ENCODE measurements at regions of chr1 and their contacts with region 1.

Region 1: GRCh38 chr1:50929376-50929958 is 30.6 kb downstream of the FAF1 start:
- DNase-seq: peak; percentile 52
- H3K4me3 ChIP-seq: no peak overlapping the region
- H3K27ac ChIP-seq: no peak overlapping the region
- H3K4me1 ChIP-seq: no peaks in the 10 kb centered on the region
- H3K27me3 ChIP-seq: no peaks in the 10 kb centered on the region
- CTCF ChIP-seq: peak; percentile 23 to 36
- POLR2A ChIP-seq: no peak

Region 2: DNA sequence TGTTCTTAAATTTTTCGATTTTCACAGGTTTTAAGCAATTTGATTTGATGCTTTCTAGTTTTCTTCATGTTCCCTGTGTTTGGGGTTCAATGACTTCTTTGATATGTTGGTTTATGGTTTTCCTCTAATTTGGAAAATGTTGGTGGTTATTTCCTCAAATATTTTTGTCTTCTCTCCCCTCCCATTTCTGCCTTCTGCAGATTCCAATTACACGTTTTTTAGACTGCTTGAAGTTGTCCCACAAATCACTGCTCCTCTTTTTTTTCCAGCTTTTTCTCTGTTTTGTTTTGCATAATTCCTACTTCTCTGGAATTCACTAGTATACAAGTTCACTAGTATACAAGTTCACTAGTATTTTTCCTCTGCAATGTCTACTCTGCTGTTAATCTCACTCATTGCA is 30.7 kb before region 1 on chr1:
- CTCF ChIA-PET with region 1: interaction called, 15 read pairs
- POLR2A ChIA-PET with region 1: no interaction called
- dilution Hi-C with region 1: no loop called
- intact Hi-C with region 1: no loop called
- DNase-seq: no peak
- H3K4me3 ChIP-seq: no peak overlapping the region
- H3K27ac ChIP-seq: no peak overlapping the region
- H3K4me1 ChIP-seq: no peaks in the 10 kb centered on the region
- H3K27me3 ChIP-seq: no peaks in the 10 kb centered on the region
- CTCF ChIP-seq: no peak
- POLR2A ChIP-seq: no peak

Region 3: GRCh38 chr1:50950396-50950795 is 20.9 kb after region 1 on chr1:
- CTCF ChIA-PET with region 1: interaction called, 21 read pairs
- POLR2A ChIA-PET with region 1: no interaction called
- dilution Hi-C with region 1: no loop called
- intact Hi-C with region 1: no loop called
- DNase-seq: no peak
- H3K4me3 ChIP-seq: no peak overlapping the region
- H3K27ac ChIP-seq: no peak overlapping the region
- H3K4me1 ChIP-seq: no peaks in the 10 kb centered on the region
- H3K27me3 ChIP-seq: no peaks in the 10 kb centered on the region
- CTCF ChIP-seq: no peak
- POLR2A ChIP-seq: no peak

Region 4: DNA sequence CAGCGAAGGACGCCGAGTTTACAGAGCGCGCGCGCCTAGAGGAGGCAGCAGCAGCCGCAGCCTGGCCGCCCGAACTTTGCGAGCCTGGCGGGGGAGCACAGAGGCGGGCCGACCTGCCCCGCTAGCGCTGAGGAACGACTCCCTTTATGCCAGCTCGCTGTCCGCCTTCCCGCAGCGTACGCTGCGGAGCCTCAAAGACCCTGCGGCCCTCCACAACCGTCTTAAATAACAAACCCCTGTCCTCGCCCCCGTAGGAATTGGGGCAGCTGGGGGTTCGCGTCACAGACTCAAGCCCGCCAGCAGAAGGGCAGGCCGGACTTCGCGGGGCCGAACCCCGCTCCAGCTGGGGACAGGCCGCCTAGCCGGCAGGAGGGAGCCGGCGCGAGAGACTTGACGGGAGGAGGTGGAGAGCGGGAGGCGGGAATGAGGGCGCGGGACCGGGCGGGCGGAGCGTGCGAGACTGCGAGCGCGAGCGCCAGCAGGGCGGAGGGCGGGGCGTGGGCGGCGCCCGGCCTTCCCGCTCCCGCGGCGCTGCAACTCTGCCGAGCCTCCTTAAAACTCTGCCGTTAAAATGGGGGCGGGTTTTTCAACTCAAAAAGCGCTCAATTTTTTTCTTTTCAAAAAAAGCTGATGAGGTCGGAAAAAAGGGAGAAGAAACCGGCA is 38.8 kb after region 1 on chr1:
- CTCF ChIA-PET with region 1: interaction called, 34 read pairs
- POLR2A ChIA-PET with region 1: no interaction called
- dilution Hi-C with region 1: no loop called
- intact Hi-C with region 1: loop called (anchors 2 kb)
- DNase-seq: peak; percentile 94
- H3K4me3 ChIP-seq: peak overlapping the region; percentile 62 to 90 (median 73)
- H3K27ac ChIP-seq: peak overlapping the region; percentile 66
- H3K4me1 ChIP-seq: peaks cover 26% of the 10 kb centered on the region
- H3K27me3 ChIP-seq: no peaks in the 10 kb centered on the region
- CTCF ChIP-seq: peak; percentile 30 to 53
- POLR2A ChIP-seq: peak; percentile 47

Region 5: DNA sequence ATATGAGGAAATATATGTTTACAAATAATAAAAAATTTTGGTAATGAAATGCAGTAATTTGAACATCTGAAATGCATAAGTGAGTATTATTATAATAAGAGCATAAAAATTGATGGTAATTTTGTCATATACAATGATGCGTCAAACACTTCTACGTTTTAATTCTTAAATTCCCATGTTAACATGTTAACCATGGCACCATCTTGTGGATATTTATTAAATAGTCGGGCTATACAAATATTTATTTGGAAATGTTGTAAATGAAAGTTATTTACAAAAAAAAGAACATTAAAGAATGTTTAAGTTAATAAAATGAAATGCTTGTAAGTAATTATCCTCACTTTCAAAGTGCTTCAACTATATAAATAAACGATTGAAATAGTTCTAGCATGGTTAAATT is 115.4 kb after region 1 on chr1:
- CTCF ChIA-PET with region 1: interaction called, 33 read pairs
- POLR2A ChIA-PET with region 1: no interaction called
- dilution Hi-C with region 1: no loop called
- intact Hi-C with region 1: loop called (anchors 2 kb)
- DNase-seq: peak; percentile 19
- H3K4me3 ChIP-seq: no peak overlapping the region
- H3K27ac ChIP-seq: no peak overlapping the region
- H3K4me1 ChIP-seq: no peaks in the 10 kb centered on the region
- H3K27me3 ChIP-seq: peaks cover 2 to 3% of the 10 kb centered on the region in 2 experiments
- CTCF ChIP-seq: no peak
- POLR2A ChIP-seq: no peak

Region 6: GRCh38 chr1:51139474-51139873 is 210.0 kb after region 1 on chr1:
- CTCF ChIA-PET with region 1: interaction called, 11 read pairs
- POLR2A ChIA-PET with region 1: no interaction called
- dilution Hi-C with region 1: no loop called
- intact Hi-C with region 1: loop called (anchors 2 kb)
- DNase-seq: peak; percentile 10
- H3K4me3 ChIP-seq: no peak overlapping the region
- H3K27ac ChIP-seq: no peak overlapping the region
- H3K4me1 ChIP-seq: no peaks in the 10 kb centered on the region
- H3K27me3 ChIP-seq: peaks cover 7 to 9% of the 10 kb centered on the region in 2 experiments
- CTCF ChIP-seq: peak in 1 of 2 donors; percentile 2
- POLR2A ChIP-seq: no peak

Region 7: GRCh38 chr1:51616901-51617708 is 687.6 kb after region 1 on chr1 and contains the start of gene OSBPL9:
- CTCF ChIA-PET with region 1: no interaction called
- POLR2A ChIA-PET with region 1: no interaction called
- dilution Hi-C with region 1: no loop called
- intact Hi-C with region 1: no loop called
- DNase-seq: peak; percentile 96
- H3K4me3 ChIP-seq: peak within 1 kb of the TSS; percentile 89 to 95 (median 92)
- H3K27ac ChIP-seq: peak within 1 kb of the TSS; percentile 50
- H3K4me1 ChIP-seq: peaks cover 28% of the 10 kb centered on the region
- H3K27me3 ChIP-seq: peaks cover 2 to 3% of the 10 kb centered on the region in 2 experiments
- CTCF ChIP-seq: no peak
- POLR2A ChIP-seq: peak; percentile 60
- total RNA-seq, gene OSBPL9: 74.8 and 80.3 TPM in 2 replicates